Ascending aorta (tissue), 2 donors: ENCODE measurements at regions of chr14 and their contacts with region 1.

Region 1: GRCh38 chr14:99654235-99654966 is 9.5 kb downstream of the HHIPL1 start:
- DNase-seq: no peak
- H3K4me3 ChIP-seq: no peak overlapping the region
- H3K27ac ChIP-seq: no peak overlapping the region
- H3K4me1 ChIP-seq: no peaks in the 10 kb centered on the region
- H3K27me3 ChIP-seq: no peaks in the 10 kb centered on the region
- CTCF ChIP-seq: no peak

Region 2: DNA sequence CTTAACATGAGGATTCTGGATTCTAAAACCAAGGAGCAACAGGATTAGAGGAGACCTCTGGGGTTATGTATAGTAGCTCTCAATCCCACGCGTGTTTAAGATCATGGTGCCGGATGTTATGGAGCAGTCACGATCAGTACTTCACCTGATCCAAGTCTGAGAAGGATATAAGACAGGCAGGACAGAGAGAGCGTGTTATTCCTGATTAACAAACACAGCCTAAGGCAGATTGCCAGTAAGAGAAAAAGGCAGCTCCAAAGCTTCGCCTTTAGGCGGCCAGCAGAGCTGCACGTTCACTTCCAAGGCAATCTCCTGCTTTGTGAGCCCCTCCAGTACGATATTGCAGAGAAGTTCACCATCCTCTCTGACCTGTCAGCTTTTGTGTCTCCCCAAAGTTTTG is 179.2 kb before region 1 on chr14:
- intact Hi-C with region 1: no loop called
- DNase-seq: no peak
- H3K4me3 ChIP-seq: no peak overlapping the region
- H3K27ac ChIP-seq: no peak overlapping the region
- H3K4me1 ChIP-seq: peaks cover 2 to 19% of the 10 kb centered on the region in 2 donors
- H3K27me3 ChIP-seq: no peaks in the 10 kb centered on the region
- CTCF ChIP-seq: no peak

Region 3: GRCh38 chr14:99698642-99699041 is 44.2 kb after region 1 on chr14:
- intact Hi-C with region 1: no loop called
- DNase-seq: no peak
- H3K4me3 ChIP-seq: no peak overlapping the region
- H3K27ac ChIP-seq: no peak overlapping the region
- H3K4me1 ChIP-seq: no peaks in the 10 kb centered on the region
- H3K27me3 ChIP-seq: no peaks in the 10 kb centered on the region
- CTCF ChIP-seq: no peak

Region 4: GRCh38 chr14:101539880-101540279 is 1885.5 kb after region 1 on chr14:
- intact Hi-C with region 1: loop called (anchors 10 kb)
- DNase-seq: no peak
- H3K4me3 ChIP-seq: no peak overlapping the region
- H3K27ac ChIP-seq: no peak overlapping the region
- H3K4me1 ChIP-seq: no peaks in the 10 kb centered on the region
- H3K27me3 ChIP-seq: no peaks in the 10 kb centered on the region
- CTCF ChIP-seq: no peak